CD4-positive, alpha-beta memory T cell (primary cell): ENCODE measurements at regions of chr1 and their contacts with region 1.

Region 1: GRCh38 chr1:151790071-151790940 is at the start of gene TDRKH:
- DNase-seq: peak; percentile 98 to 100 (median 99)
- H3K4me3 ChIP-seq: peak within 1 kb of the TSS; percentile 86 to 100
- H3K4me3 Mint-ChIP-seq: peak within 1 kb of the TSS; percentile 91 to 99 (median 96)
- H3K27ac ChIP-seq: peak within 1 kb of the TSS; percentile 51
- H3K27ac Mint-ChIP-seq: peak within 1 kb of the TSS; percentile 85 to 98 (median 90)
- H3K4me1 ChIP-seq: peaks cover 29% of the 10 kb centered on the region
- H3K4me1 Mint-ChIP-seq: peaks cover 21 to 41% (median 34%) of the 10 kb centered on the region in 4 donors
- H3K27me3 ChIP-seq: no peaks in the 10 kb centered on the region
- H3K27me3 Mint-ChIP-seq: no peaks in the 10 kb centered on the region
- total RNA-seq, gene TDRKH: 29.1 to 29.3 TPM

Region 2: GRCh38 chr1:151611832-151612500 is 178.3 kb before region 1 on chr1 and contains the start of gene SNX27:
- CTCF ChIA-PET with region 1: no interaction called
- POLR2A ChIA-PET with region 1: no interaction called
- intact Hi-C with region 1: loop called (anchors 1 kb)
- DNase-seq: peak; percentile 87 to 96 (median 89)
- H3K4me3 ChIP-seq: peak within 1 kb of the TSS; percentile 73 to 77
- H3K4me3 Mint-ChIP-seq: peak within 1 kb of the TSS; percentile 98 to 100 (median 99)
- H3K27ac ChIP-seq: peak within 1 kb of the TSS; percentile 87
- H3K27ac Mint-ChIP-seq: peak within 1 kb of the TSS; percentile 89 to 99 (median 97)
- H3K4me1 ChIP-seq: peaks cover 32% of the 10 kb centered on the region
- H3K4me1 Mint-ChIP-seq: peaks cover 31 to 46% (median 39%) of the 10 kb centered on the region in 4 donors
- H3K27me3 ChIP-seq: no peaks in the 10 kb centered on the region
- H3K27me3 Mint-ChIP-seq: peaks cover 0 to 1% of the 10 kb centered on the region in 2 donors
- total RNA-seq, gene SNX27: 40.0 to 44.3 TPM

Region 3: DNA sequence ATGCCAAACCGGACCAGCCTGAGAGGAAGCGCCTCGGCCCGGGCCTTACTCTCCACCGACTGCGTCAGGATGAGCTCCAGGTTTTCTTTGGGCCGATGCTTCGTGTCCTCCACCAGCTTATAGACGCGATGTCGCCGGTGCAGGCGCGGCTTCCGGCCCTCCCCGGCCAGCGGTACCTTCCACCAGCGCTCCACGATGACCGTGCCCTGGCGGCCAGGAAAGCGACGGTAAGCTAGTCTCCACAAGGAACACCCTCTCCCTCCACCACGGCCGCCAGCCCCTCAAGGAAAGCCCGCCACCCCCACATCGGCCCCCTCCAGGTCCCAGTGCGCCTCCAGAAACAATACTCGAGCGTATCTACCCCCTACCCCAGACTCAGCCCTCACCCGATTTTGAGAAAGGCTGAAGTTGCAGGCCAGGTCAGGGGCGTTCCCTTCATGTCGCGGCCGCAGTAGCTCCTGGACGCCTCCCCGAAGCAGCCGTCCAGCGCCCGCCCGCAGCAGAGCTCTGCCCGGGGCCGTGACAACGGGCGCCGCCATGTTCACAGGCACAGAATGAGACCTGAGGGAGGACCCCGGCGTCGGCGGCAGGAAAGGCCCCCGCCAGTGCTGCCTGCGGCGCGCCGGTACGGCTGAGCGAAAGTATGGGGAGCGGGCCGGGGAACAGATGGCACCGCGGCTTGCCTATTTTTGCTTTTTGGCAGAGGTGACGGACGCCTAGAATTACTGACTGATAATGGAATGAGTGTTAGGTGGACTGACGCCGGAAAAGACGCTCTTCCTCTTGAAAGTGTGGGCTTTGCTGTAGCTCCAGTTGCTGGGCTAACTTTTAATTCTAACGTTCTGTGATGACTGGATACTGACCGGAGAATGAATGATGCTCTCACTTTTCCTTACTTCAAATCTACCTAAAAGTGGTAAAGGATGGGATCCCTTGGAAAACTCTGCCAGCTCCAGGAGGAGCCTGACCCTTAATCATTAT is 27.1 kb before region 1 on chr1 and contains the start of gene MRPL9:
- CTCF ChIA-PET with region 1: interaction called, 9 read pairs
- POLR2A ChIA-PET with region 1: interaction called, 25 read pairs
- intact Hi-C with region 1: loop called (anchors 1 kb)
- DNase-seq: peak; percentile 82 to 85 (median 83)
- H3K4me3 ChIP-seq: peak within 1 kb of the TSS; percentile 34 to 66
- H3K4me3 Mint-ChIP-seq: peak within 1 kb of the TSS; percentile 86 to 97 (median 92)
- H3K27ac ChIP-seq: peak within 1 kb of the TSS; percentile 72
- H3K27ac Mint-ChIP-seq: peak within 1 kb of the TSS; percentile 90 to 99 (median 96)
- H3K4me1 ChIP-seq: peaks cover 16% of the 10 kb centered on the region
- H3K4me1 Mint-ChIP-seq: peaks cover 12 to 30% (median 21%) of the 10 kb centered on the region in 4 donors
- H3K27me3 ChIP-seq: no peaks in the 10 kb centered on the region
- H3K27me3 Mint-ChIP-seq: no peaks in the 10 kb centered on the region
- total RNA-seq, gene MRPL9: 75.5 to 82.8 TPM

Region 4: DNA sequence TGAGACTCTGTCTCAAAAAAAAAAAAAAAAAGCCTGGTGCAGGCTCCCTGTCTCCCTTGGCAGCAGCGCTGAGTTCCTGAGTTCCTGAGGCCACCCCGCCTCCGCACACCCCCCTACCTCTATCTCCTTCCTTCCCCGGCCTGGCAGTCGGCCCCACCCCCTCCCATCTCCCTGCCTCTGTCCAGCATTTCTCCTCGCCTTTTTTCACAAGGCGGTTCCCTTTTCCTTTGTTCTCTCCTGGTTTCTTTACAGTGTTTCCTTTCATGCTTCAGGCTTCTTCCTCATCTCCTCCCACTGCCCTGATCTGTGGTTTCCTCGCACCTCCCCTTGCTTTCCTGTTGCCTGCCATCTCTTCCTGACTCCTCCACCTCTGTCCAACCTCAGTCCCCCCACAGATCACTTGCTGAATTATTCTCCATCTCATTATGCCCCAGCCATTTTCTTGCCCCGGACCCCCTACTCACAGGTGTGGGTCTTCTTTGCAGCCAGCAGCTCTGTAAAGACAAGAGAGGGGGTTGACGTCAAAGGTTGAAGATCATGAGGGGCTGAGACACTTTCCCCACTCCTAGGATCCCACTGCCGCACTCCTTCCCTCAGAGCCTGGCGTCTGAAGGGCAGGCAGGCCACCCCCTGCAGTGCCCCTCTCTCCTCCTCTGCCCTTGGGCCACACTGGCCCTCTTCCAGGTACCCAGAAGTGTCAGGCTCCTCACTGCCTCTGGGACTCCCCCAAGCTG is 38.8 kb after region 1 on chr1:
- CTCF ChIA-PET with region 1: interaction called, 10 read pairs
- POLR2A ChIA-PET with region 1: interaction called, 39 read pairs
- intact Hi-C with region 1: no loop called
- DNase-seq: no peak
- H3K4me3 ChIP-seq: no peak overlapping the region
- H3K4me3 Mint-ChIP-seq: peak overlapping the region; percentile 60 to 94 (median 76)
- H3K27ac ChIP-seq: peak overlapping the region; percentile 62
- H3K27ac Mint-ChIP-seq: peak overlapping the region; percentile 88 to 96 (median 93)
- H3K4me1 ChIP-seq: peaks cover 90% of the 10 kb centered on the region
- H3K4me1 Mint-ChIP-seq: peaks cover 55 to 98% (median 75%) of the 10 kb centered on the region in 4 donors
- H3K27me3 ChIP-seq: no peaks in the 10 kb centered on the region
- H3K27me3 Mint-ChIP-seq: no peaks in the 10 kb centered on the region

Region 5: GRCh38 chr1:151920149-151920548 is 129.8 kb after region 1 on chr1:
- CTCF ChIA-PET with region 1: no interaction called
- POLR2A ChIA-PET with region 1: no interaction called
- intact Hi-C with region 1: no loop called
- DNase-seq: no peak
- H3K4me3 ChIP-seq: no peak overlapping the region
- H3K4me3 Mint-ChIP-seq: peak overlapping the region in 1 of 8 donors; percentile 7
- H3K27ac ChIP-seq: no peak overlapping the region
- H3K27ac Mint-ChIP-seq: no peak overlapping the region
- H3K4me1 ChIP-seq: peaks cover 8% of the 10 kb centered on the region
- H3K4me1 Mint-ChIP-seq: peaks cover 4 to 8% (median 4%) of the 10 kb centered on the region in 4 donors
- H3K27me3 ChIP-seq: no peaks in the 10 kb centered on the region
- H3K27me3 Mint-ChIP-seq: peaks cover 0 to 1% of the 10 kb centered on the region in 2 donors